Transverse colon (tissue), 4 donors: ENCODE measurements at regions of chr22 and their contacts with region 1.

Region 1: GRCh38 chr22:33018232-33018864 is 39.8 kb downstream of the SYN3 start:
- DNase-seq: peak; percentile 39
- H3K4me3 ChIP-seq: no peak overlapping the region
- H3K27ac ChIP-seq: no peak overlapping the region
- H3K4me1 ChIP-seq: no peaks in the 10 kb centered on the region
- H3K27me3 ChIP-seq: no peaks in the 10 kb centered on the region
- CTCF ChIP-seq: peak; percentile 41 to 83 (median 69)
- EP300 ChIP-seq: no peak
- POLR2A ChIP-seq: no peak

Region 2: DNA sequence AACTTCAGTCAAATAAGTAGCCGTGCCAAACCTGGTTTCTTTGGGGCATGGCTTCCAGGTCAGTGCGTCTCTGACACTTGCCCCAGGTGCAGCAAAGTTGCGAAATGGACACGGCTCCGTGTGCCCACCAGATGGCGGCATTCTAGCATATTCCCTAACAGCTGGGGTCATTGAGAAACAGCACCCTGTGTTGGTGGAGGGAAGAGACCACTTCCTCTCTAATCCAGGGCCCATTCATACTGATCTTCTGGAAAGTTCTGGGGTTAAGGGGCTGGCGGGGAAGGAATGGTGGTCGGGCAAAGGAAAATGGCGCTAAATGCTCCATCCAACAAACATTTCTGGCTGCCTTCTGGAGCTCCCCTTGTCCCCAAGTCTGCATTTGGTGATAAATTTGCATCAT is 358.1 kb before region 1 on chr22:
- in situ Hi-C with region 1: loop called in 1 of 4 experiments (anchors 25 kb)
- intact Hi-C with region 1: no loop called
- DNase-seq: peak; percentile 69
- H3K4me3 ChIP-seq: no peak overlapping the region
- H3K27ac ChIP-seq: no peak overlapping the region
- H3K4me1 ChIP-seq: no peaks in the 10 kb centered on the region
- H3K27me3 ChIP-seq: no peaks in the 10 kb centered on the region
- CTCF ChIP-seq: peak; percentile 68 to 74 (median 72)
- EP300 ChIP-seq: no peak
- POLR2A ChIP-seq: no peak